H1 (cell line): ENCODE measurements at regions of chr7 and their contacts with region 1.

Region 1: GRCh38 chr7:50206453-50207250 is 97.9 kb upstream of the IKZF1 start:
- DNase-seq: no peak
- H3K4me3 ChIP-seq: no peak overlapping the region
- H3K27ac ChIP-seq: no peak overlapping the region
- H3K4me1 ChIP-seq: no peaks in the 10 kb centered on the region
- H3K27me3 ChIP-seq: no peaks in the 10 kb centered on the region; a peak in 1 of 7 replicates
- CTCF ChIP-seq: no peak
- EP300 ChIP-seq: no peak
- POLR2A ChIP-seq: no peak
- RAD21 ChIP-seq: no peak

Region 2: GRCh38 chr7:50182759-50183158 is 23.9 kb before region 1 on chr7:
- CTCF ChIA-PET with region 1: interaction called, 18 read pairs
- POLR2A ChIA-PET with region 1: no interaction called
- DNase-seq: no peak
- H3K4me3 ChIP-seq: no peak overlapping the region
- H3K27ac ChIP-seq: no peak overlapping the region
- H3K4me1 ChIP-seq: peaks cover 0 to 8% (median 0%) of the 10 kb centered on the region in 4 experiments; a peak in 1 of 7 replicates
- H3K27me3 ChIP-seq: no peaks in the 10 kb centered on the region
- CTCF ChIP-seq: no peak
- EP300 ChIP-seq: no peak
- POLR2A ChIP-seq: no peak
- RAD21 ChIP-seq: no peak

Region 3: GRCh38 chr7:50359995-50360925 is 153.6 kb after region 1 on chr7:
- CTCF ChIA-PET with region 1: interaction called, 12 read pairs
- POLR2A ChIA-PET with region 1: no interaction called
- DNase-seq: no peak
- H3K4me3 ChIP-seq: no peak overlapping the region
- H3K27ac ChIP-seq: no peak overlapping the region
- H3K4me1 ChIP-seq: no peaks in the 10 kb centered on the region
- H3K27me3 ChIP-seq: no peaks in the 10 kb centered on the region
- CTCF ChIP-seq: no peak
- EP300 ChIP-seq: no peak
- POLR2A ChIP-seq: no peak
- RAD21 ChIP-seq: no peak

Region 4: DNA sequence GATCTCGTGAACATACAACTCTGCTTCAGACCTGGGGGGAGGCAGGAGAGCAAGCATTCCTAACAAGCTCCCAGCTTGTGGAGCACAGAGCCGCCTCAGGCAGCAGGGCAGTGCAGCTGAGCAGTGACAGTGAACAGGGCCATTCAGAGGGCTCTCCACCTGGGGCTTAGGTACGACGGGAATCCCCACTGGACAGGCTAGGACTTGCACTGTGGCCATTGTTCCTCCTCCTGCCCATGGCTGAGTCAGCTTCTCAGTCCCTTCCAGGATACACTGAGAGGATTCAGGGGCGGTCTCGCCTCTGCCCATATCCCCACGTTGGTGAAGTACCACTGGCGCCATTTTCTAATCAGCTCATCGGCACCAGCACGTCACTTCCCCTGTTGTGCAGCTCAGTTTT is 172.4 kb after region 1 on chr7:
- CTCF ChIA-PET with region 1: interaction called, 16 read pairs
- POLR2A ChIA-PET with region 1: no interaction called
- DNase-seq: peak; percentile 51 to 62
- H3K4me3 ChIP-seq: peak overlapping the region in 3 of 4 experiments; percentile 29 to 43 (median 40); a peak in 5 of 8 replicates
- H3K27ac ChIP-seq: peak overlapping the region; percentile 82; the same call in 1 of the 2 replicates
- H3K4me1 ChIP-seq: peaks cover 6 to 27% (median 19%) of the 10 kb centered on the region in 4 experiments
- H3K27me3 ChIP-seq: no peaks in the 10 kb centered on the region
- CTCF ChIP-seq: no peak
- EP300 ChIP-seq: no peak
- POLR2A ChIP-seq: peak; percentile 57 to 76
- RAD21 ChIP-seq: no peak